Left cardiac atrium (tissue), 4 donors: ENCODE measurements at regions of chr17 and their contacts with region 1.

Region 1: DNA sequence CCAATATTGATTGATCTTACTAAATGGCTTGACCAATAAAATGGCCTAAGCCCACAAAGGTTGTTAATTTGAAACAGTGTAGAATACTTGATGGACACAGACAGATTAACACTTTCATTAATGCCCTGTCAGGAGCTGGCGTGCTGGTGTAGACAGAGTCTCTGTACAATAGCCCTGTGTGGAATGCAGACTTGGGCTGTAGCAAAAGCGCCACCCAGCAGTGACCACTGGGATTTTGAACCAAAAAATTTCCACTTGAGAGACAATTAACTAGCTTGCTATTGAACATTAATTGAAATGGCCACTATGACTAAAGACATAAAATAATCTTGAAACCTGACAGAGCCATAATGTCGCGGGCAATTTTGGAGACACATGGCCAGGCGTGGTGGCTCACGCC is 19.7 kb upstream of the GUCY2D start:
- DNase-seq: no peak
- ATAC-seq: no peak

Region 2: DNA sequence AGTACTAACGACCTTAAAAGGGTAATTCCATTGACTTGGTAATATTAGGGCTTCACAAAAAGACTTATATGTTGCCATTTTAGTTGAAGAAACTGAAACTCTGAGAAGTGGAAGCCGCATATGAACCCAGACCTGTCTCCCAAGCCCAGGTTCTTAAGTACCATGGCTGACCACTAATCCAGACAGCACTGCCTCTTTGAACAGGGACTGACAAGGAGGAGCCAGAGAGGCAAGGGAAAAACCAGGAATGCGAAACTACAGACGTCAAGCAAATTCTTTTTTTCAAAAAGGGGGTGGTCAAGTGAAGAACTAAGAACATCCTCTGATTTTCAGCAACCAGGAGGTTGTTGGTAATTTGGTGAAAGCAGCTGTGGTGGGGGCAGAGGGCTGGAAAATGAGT is 109.6 kb before region 1 on chr17:
- intact Hi-C with region 1: loop called in 1 of 2 experiments (anchors 5 kb)
- DNase-seq: no peak
- ATAC-seq: no peak